Astrocyte of the cerebellum (primary cell): ENCODE measurements at regions of chr1 and their contacts with region 1.

Region 1: GRCh38 chr1:191405417-191405816 is 752.8 kb upstream of the RGS18 start:
- DNase-seq: no peak
- H3K4me3 ChIP-seq: no peak overlapping the region
- CTCF ChIP-seq: no peak

Region 2: DNA sequence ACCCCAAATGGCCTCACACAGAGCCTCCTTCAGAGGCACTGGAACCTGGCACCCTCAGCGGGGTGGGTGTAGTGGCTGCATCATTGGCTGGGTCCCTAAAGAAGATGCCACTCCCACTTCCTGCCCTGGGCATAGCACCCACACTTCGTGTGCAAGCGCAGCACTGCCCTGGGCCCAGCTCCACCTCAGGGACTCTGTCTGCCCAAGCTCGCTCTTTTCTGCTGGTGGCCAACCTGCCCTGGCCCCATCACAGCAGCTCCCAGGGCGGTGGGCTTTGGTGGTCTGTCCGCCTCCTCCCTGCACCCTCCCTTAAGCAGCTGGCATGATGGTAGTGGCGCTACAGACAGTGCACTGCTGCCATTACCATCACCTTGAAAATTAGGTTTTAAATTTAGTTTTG is 98.5 kb before region 1 on chr1:
- in situ Hi-C with region 1: loop called (anchors 5 kb)
- DNase-seq: no peak
- H3K4me3 ChIP-seq: no peak overlapping the region
- CTCF ChIP-seq: no peak